Sigmoid colon (tissue), 7 donors: ENCODE measurements at regions of chr21 and their contacts with region 1.

Region 1: GRCh38 chr21:33641336-33642026 is at the start of gene CRYZL1:
- DNase-seq: peak; percentile 100
- H3K4me3 ChIP-seq: peak within 1 kb of the TSS; percentile 70 to 99 (median 92)
- H3K27ac ChIP-seq: peak within 1 kb of the TSS; percentile 94 to 97 (median 96)
- H3K4me1 ChIP-seq: peaks cover 0 to 34% (median 29%) of the 10 kb centered on the region in 4 donors
- H3K27me3 ChIP-seq: no peaks in the 10 kb centered on the region
- CTCF ChIP-seq: no peak
- EP300 ChIP-seq: peak in 1 of 4 donors; percentile 10
- POLR2A ChIP-seq: peak in 1 of 2 donors; percentile 74
- total RNA-seq, gene CRYZL1: 46.6 to 90.8 (median 62.7) TPM

Region 2: GRCh38 chr21:33479679-33480480 is 161.6 kb before region 1 on chr21 and contains the start of gene TMEM50B:
- intact Hi-C with region 1: loop called (anchors 5 kb)
- DNase-seq: peak; percentile 98
- H3K4me3 ChIP-seq: peak within 1 kb of the TSS; percentile 86 to 99 (median 96)
- H3K27ac ChIP-seq: peak within 1 kb of the TSS; percentile 96 to 100 (median 99)
- H3K4me1 ChIP-seq: peaks cover 3 to 21% (median 17%) of the 10 kb centered on the region in 4 donors
- H3K27me3 ChIP-seq: no peaks in the 10 kb centered on the region
- CTCF ChIP-seq: peak; percentile 46 to 60 (median 51)
- EP300 ChIP-seq: no peak
- POLR2A ChIP-seq: peak; percentile 88 to 93
- total RNA-seq, gene TMEM50B: 63.3 to 106 (median 85.1) TPM

Region 3: DNA sequence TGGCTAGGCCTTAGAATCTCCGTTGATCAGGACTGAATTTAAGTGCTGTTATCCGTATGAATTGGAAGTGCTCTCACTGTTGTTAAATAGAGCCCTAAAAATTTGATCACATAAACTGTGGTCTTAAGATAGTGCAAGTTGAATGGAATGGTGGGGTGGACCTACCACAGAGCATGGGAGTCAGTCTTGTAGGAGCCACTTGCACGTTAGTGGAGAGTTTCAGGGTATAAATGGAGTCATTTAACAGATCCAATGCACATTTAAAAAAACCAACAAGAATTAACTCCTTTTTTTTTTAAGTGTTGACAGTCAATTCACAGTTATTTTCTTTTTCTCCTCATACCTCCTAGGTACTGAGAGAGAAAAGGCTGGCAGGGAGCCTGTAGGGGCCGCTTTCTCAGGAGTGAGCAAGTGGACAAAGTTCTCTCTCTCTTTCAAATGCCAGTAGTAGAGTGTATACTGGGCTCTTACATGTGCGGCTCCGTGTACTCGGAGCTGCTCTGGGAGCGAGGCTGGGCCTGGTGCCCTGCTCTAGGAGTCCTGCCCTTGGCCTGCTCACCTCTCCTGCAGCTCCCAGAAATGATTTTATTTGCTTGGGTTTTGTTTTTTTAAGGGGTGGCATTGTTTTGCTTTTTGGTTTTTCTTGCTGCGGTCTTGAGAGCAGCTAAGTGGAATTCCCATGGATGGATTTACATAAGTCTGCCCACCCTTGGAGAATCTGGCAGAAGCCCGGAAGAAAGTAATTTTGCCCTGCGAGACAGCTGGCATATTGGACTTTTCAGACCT is 182.9 kb after region 1 on chr21:
- intact Hi-C with region 1: loop called (anchors 5 kb)
- DNase-seq: no peak
- H3K4me3 ChIP-seq: no peak overlapping the region
- H3K27ac ChIP-seq: peak overlapping the region in 3 of 4 donors; percentile 38 to 72 (median 71)
- H3K4me1 ChIP-seq: peaks cover 0 to 81% (median 68%) of the 10 kb centered on the region in 4 donors
- H3K27me3 ChIP-seq: no peaks in the 10 kb centered on the region
- CTCF ChIP-seq: no peak
- EP300 ChIP-seq: no peak
- POLR2A ChIP-seq: no peak

Region 4: DNA sequence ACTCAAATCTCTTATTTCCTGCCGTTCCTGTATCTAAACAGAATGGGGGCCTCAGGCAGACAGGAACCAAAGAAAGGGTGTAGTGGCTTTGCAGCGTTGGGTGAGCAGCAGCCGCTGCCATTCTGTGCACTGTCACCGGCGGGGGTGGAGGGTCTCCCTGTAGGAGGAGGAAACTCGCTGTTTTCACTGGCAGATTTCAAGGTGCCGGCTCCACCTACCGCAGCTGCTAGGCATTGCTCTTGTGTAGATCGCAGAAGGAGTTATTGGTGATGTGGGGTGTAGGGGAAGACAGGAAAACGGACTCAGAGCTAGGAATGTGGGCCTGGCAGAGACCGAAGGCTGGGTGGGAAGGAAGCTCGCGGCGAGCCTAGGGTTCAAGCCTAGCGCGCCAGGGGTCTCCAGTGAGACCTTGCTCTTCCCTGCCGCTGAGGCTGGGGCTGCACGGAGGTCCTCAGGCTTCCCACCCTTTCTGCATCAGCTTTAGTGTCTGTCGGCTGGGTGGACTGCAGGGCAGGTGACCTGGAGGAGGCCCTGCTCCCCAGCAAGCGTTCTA is 253.3 kb after region 1 on chr21:
- intact Hi-C with region 1: loop called (anchors 2 kb)
- DNase-seq: peak; percentile 88
- H3K4me3 ChIP-seq: peak overlapping the region in 3 of 4 donors; percentile 14 to 38 (median 37)
- H3K27ac ChIP-seq: no peak overlapping the region
- H3K4me1 ChIP-seq: peaks cover 0 to 28% (median 21%) of the 10 kb centered on the region in 4 donors
- H3K27me3 ChIP-seq: no peaks in the 10 kb centered on the region
- CTCF ChIP-seq: peak; percentile 42 to 80 (median 70)
- EP300 ChIP-seq: no peak
- POLR2A ChIP-seq: no peak